Activated CD4-positive, alpha-beta T cell treated with anti-CD3 and anti-CD28 coated beads, Interleukin-2, amount 10 ng/mL, durations not matched to agents 24 days and 14 days (primary cell): ENCODE measurements at regions of chr15 and their contacts with region 1.

Region 1: DNA sequence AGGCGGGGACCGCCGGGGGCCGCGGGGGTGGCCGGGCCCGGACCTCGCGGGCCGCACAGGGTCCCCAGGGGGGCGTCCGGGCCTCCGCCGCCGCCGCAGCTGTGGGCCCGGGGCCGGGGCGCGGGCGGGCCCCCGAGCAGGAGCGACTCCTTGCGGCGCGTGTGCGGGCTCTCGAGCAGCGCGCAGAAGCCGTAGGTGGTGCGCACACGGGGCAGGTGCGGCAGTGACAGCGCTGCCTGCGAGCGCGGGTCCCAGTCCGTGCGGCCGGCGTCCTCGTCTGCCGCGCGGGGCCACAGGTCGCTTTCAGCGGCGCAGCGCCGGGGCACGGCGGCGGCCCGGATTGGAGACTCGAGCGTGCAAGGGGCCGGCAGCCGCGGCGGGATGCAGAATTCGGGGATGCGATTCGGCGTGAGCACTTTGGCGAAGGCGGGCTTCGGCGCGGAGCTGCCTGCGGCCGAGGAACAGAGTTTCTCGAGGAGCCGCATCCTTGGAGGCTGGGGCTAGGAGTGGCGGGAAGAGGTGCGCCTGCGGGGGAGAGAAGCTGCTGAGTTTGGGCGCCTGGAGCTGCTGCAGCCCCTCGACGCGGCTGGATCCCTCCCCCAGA is 483 bp downstream of the C2CD4B start:
- DNase-seq: peak; percentile 66
- H3K4me3 Mint-ChIP-seq: peak overlapping the region; percentile 79
- H3K27ac Mint-ChIP-seq: no peak overlapping the region
- H3K4me1 Mint-ChIP-seq: peaks cover 2% of the 10 kb centered on the region
- H3K27me3 Mint-ChIP-seq: peaks cover 70% of the 10 kb centered on the region

Region 2: GRCh38 chr15:62066663-62067447 is 97.7 kb before region 1 on chr15 and contains the start of gene C2CD4A:
- intact Hi-C with region 1: loop called (anchors 5 kb)
- DNase-seq: peak; percentile 84
- H3K4me3 Mint-ChIP-seq: peak within 1 kb of the TSS; percentile 78
- H3K27ac Mint-ChIP-seq: peak within 1 kb of the TSS; percentile 14
- H3K4me1 Mint-ChIP-seq: peaks cover 21% of the 10 kb centered on the region
- H3K27me3 Mint-ChIP-seq: peaks cover 54% of the 10 kb centered on the region
- total RNA-seq, gene C2CD4A: 0.05 and 0.24 TPM in 2 replicates